ENCODE measurements at regions of chr2 and their contacts with region 1.

Region 1: GRCh38 chr2:204051476-204051875 is 114.9 kb downstream of the ICOS start:
- DNase-seq: no peak
- H3K4me3 Mint-ChIP-seq: no peak overlapping the region
- H3K27ac Mint-ChIP-seq: no peak overlapping the region
- H3K4me1 Mint-ChIP-seq: no peaks in the 10 kb centered on the region
- H3K27me3 Mint-ChIP-seq: peaks cover 83% of the 10 kb centered on the region
- CTCF ChIP-seq: no peak

Region 2: DNA sequence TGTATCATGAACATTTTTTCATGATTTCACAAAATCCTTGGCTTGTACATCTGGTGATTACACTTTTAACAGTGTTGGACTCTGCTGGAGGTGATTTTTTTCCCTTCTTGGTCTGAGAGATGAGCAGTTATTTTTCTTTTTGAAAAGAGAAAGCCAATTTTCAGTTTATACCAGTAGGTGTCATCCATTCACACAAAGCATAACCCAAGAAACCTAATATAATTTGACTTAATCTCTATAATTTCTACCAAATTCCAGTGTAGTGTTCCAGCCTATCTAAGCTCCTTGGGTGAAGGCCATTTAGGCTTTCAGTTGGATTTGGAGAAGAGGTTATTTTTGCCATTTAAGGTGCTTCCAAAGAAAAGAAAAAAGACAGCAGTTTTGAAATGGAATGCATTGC is 122.6 kb before region 1 on chr2:
- CTCF ChIA-PET with region 1: no interaction called
- intact Hi-C with region 1: loop called (anchors 5 kb)
- DNase-seq: no peak
- H3K4me3 Mint-ChIP-seq: no peak overlapping the region
- H3K27ac Mint-ChIP-seq: no peak overlapping the region
- H3K4me1 Mint-ChIP-seq: no peaks in the 10 kb centered on the region
- H3K27me3 Mint-ChIP-seq: no peaks in the 10 kb centered on the region
- CTCF ChIP-seq: no peak

Region 3: GRCh38 chr2:204415406-204416181 is 364.1 kb after region 1 on chr2:
- CTCF ChIA-PET with region 1: no interaction called
- intact Hi-C with region 1: no loop called
- DNase-seq: no peak
- H3K4me3 Mint-ChIP-seq: no peak overlapping the region
- H3K27ac Mint-ChIP-seq: no peak overlapping the region
- H3K4me1 Mint-ChIP-seq: no peaks in the 10 kb centered on the region
- H3K27me3 Mint-ChIP-seq: peaks cover 19% of the 10 kb centered on the region
- CTCF ChIP-seq: no peak

Region 4: DNA sequence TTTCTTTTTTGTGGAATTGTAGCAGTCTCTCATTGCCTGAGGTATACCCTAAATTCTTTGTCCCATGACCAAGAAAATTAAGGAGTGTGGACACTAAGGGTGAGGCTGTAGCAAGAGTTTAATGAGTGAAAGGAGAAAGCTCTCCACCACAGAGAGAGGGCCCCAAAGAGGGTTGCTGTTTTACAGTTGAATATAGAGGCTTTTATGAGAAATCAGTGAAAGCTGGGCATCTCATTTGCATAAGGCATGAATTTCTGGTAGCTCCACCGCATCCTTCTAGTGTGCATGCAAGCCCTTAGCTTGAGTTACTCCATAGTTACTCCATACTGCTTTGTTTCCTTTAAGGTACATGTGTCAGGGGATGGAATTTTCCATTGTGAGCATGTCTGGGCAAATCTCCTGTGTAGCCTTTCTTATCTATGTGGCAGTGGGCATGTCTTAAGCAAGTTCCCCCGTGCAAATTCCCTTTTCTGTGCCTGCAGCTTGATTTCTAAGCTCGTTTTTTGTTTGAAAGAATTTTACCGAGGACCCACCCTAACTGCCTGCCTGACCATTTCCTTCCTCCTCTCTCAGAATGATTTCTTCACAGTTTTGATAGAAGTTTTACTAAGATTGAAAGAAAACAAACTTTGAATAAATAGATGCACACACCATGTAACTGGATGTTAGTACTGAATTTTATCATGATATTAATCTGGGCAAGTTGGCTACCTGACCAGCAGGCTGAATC is 712.7 kb after region 1 on chr2:
- CTCF ChIA-PET with region 1: no interaction called
- intact Hi-C with region 1: no loop called
- DNase-seq: no peak
- H3K4me3 Mint-ChIP-seq: no peak overlapping the region
- H3K27ac Mint-ChIP-seq: no peak overlapping the region
- H3K4me1 Mint-ChIP-seq: no peaks in the 10 kb centered on the region
- H3K27me3 Mint-ChIP-seq: no peaks in the 10 kb centered on the region
- CTCF ChIP-seq: no peak

Measured in Calu3 (cell line).